IMR-90 (cell line): ENCODE measurements at regions of chr4 and their contacts with region 1.

Region 1: GRCh38 chr4:174222266-174222872 is 61.1 kb downstream of the FBXO8 start:
- DNase-seq: peak; percentile 29
- ATAC-seq: 0 out of 2 replicates have a peak, but pooled peaks have one; percentile 40
- H3K4me3 ChIP-seq: no peak overlapping the region
- H3K27ac ChIP-seq: no peak overlapping the region
- H3K4me1 ChIP-seq: no peaks in the 10 kb centered on the region; the same call in 1 of the 2 replicates
- H3K27me3 ChIP-seq: peaks cover 16% of the 10 kb centered on the region
- CTCF ChIP-seq: peak; percentile 57
- POLR2A ChIP-seq: no peak
- RAD21 ChIP-seq: peak; percentile 51

Region 2: GRCh38 chr4:174282836-174283506 is 60.6 kb after region 1 on chr4:
- CTCF ChIA-PET with region 1: interaction called, 3 read pairs
- POLR2A ChIA-PET with region 1: no interaction called
- dilution Hi-C with region 1: no loop called
- in situ Hi-C with region 1: no loop called
- intact Hi-C with region 1: loop called (anchors 2 kb)
- DNase-seq: peak; percentile 94
- ATAC-seq: peak; percentile 92
- H3K4me3 ChIP-seq: peak overlapping the region; percentile 60
- H3K27ac ChIP-seq: peak overlapping the region; percentile 96
- H3K4me1 ChIP-seq: no peaks in the 10 kb centered on the region
- H3K27me3 ChIP-seq: no peaks in the 10 kb centered on the region
- CTCF ChIP-seq: no peak
- POLR2A ChIP-seq: no peak
- RAD21 ChIP-seq: no peak

Region 3: DNA sequence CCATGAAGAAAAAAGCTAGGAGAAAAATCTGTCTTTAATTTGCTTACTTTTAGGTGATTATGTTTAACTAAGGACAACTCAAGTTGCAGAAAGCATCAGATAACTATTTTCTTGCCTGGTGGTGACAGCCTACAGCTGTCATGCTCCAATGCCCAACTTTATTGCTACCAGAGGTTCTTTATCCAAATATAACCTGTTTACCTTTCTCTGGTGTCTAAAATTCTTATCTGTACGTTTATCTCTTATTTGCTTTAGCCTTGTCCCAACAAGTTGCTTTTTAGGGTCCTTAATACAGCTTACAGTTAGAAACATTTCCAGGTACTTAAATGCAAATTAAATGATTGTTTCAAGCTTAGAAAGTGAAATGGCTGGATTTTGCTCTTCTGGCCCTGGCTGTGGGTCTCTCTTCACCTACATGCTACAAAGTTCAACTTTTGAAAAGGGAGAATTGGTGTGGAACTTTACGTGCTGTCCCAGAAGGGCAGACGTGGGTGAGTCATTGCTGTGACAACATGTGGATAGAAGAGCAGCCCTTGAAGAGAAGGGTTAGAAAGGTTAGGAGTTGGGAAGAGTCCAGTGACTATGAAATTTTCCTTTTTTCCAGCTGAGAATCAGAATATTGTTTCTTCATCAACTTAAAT is 239.2 kb after region 1 on chr4:
- CTCF ChIA-PET with region 1: no interaction called
- POLR2A ChIA-PET with region 1: no interaction called
- dilution Hi-C with region 1: no loop called
- in situ Hi-C with region 1: no loop called
- intact Hi-C with region 1: no loop called
- DNase-seq: no peak
- ATAC-seq: no peak
- H3K4me3 ChIP-seq: no peak overlapping the region
- H3K27ac ChIP-seq: no peak overlapping the region
- H3K4me1 ChIP-seq: no peaks in the 10 kb centered on the region
- H3K27me3 ChIP-seq: no peaks in the 10 kb centered on the region
- CTCF ChIP-seq: no peak
- POLR2A ChIP-seq: no peak
- RAD21 ChIP-seq: no peak